Cardiac septum (tissue), 1 donor: ENCODE measurements at regions of chr3 and their contacts with region 1.

Region 1: GRCh38 chr3:123328851-123329635 is 119.8 kb downstream of the ADCY5 start:
- DNase-seq: peak; percentile 90

Region 2: GRCh38 chr3:123081718-123082369 is 247.2 kb before region 1 on chr3:
- intact Hi-C with region 1: no loop called
- DNase-seq: no peak

Region 3: DNA sequence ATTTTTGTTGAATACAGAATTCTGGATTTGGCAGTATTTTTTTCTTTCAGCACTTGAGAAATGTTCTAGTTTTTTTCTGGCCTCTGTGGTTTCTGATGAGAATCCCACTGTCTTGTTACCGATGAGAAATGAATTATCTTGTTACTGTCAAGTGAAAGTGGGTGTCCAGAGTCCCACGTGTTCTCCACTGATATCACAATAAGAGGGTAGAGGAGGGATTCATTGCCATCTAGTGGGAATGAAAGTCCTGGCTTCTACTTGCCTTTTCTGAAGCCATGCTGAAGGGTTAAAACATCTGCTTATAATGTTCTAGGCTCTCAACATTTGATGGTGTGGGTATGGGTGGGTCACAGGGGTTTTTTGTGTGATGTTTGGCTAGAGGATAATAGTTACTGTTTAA is 61.2 kb before region 1 on chr3:
- intact Hi-C with region 1: no loop called
- DNase-seq: no peak

Region 4: GRCh38 chr3:123375014-123375940 is 46.2 kb after region 1 on chr3:
- intact Hi-C with region 1: loop called (anchors 2 kb)
- DNase-seq: peak; percentile 66

Region 5: DNA sequence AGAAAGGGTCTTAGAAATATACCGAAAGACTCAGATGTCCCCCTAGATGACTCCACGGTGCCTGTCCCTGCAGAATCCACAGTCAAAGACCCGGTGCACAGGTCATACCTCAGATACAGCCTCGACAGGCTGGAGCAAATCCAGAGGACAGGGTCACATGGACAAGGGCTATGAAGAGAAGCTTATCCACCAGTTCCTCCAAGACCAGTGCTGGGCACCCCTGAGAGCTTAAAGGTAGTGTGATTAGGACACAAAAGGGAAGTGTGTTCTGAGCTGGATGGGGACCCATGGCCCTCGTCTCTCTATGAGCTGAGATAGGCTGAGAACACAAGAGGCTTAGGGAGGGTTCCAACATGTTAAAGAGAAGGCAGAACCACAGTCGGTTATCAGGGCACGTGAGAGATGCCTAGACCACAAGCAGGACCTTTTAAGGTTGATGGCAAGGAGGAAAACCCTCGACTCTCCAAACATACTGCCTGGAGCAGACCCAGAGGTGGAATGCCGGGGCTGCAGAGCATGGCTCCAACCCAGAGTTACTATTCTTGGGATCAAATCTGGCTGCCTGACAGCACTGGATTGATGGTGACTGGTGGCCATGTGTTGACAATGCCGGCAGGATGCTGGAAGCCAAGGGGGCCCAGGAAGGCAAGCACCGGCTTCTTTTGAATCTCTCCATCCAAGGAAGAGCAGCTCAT is 72.9 kb after region 1 on chr3:
- intact Hi-C with region 1: loop called (anchors 5 kb)
- DNase-seq: peak; percentile 87

Region 6: DNA sequence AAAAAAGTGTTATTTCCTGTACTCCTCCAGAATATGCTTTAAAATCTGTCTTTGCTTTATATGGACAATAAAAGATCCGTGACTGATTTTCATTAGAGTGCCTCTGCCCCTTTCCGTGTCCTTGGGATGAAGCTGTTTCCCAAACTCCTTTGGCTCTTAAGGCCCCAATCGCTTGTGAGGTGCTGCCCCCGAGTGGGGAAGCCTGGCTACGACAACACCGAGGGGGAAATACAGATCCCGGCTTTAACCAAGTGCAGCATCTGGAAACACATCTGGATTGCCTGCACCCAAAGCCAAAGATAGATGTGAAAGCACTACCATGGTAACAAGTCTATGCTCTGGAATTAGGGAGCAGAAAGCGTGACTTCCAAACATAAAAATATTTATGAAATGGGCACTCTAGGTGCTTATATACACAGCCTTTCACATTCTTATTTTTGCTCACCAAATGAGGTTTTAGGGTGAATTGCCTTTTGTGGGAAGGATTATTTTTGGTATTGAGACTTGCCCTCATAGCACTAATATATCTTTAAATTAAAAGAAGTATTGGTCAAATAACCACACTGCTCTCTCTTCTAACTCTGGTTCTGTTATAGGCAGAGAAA is 160.5 kb after region 1 on chr3:
- intact Hi-C with region 1: loop called (anchors 1 kb)
- DNase-seq: no peak

Region 7: DNA sequence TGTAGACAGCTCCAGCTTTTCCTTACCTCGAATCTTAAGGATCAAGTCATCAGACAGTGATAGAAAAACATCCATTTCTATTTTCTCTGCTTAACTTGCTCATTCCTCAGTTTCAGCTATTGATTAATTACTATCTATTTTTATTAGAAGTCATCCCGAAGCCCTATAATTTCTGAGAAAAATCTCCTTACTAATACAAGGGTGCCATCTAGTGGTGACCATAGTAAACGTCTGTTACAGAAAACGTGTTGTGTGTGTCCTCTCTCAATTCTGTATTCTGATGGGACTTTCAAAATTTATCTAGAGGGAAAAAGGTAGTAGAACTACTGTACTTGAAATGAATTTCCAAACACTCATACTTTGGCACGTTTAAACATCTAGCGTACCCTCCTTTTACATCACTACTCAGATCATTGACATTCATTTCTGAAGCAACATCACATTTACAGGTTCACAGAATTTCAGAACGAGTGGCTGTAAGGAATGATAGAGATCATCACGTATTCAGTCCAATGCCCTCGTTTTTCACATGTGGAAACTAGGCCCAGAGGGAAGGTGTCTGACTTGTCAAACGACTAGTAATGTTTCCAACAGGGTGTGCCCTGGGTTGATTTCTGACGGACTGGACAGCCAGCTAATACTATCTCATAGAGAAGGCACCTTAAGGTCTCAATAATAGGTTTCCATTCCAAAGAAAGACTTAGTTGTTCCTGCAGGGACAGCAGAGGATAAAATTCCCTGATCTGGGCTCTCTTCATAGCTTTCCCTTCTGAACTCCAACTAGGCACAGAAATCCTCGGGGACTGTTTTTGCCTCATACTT is 230.2 kb after region 1 on chr3:
- intact Hi-C with region 1: loop called (anchors 5 kb)
- DNase-seq: no peak